MCF 10A (cell line): ENCODE measurements at regions of chr5 and their contacts with region 1.

Region 1: GRCh38 chr5:38265546-38266179 is 7.3 kb downstream of the EGFLAM start:
- DNase-seq: peak; percentile 61
- H3K4me3 Mint-ChIP-seq: no peak overlapping the region
- H3K27ac Mint-ChIP-seq: no peak overlapping the region
- H3K4me1 Mint-ChIP-seq: no peaks in the 10 kb centered on the region
- H3K27me3 Mint-ChIP-seq: peaks cover 52% of the 10 kb centered on the region
- CTCF ChIP-seq: peak; percentile 81

Region 2: GRCh38 chr5:37799865-37800421 is 465.7 kb before region 1 on chr5:
- CTCF ChIA-PET with region 1: no interaction called
- POLR2A ChIA-PET with region 1: no interaction called
- intact Hi-C with region 1: no loop called
- DNase-seq: peak; percentile 14
- H3K4me3 Mint-ChIP-seq: no peak overlapping the region
- H3K27ac Mint-ChIP-seq: no peak overlapping the region
- H3K4me1 Mint-ChIP-seq: no peaks in the 10 kb centered on the region
- H3K27me3 Mint-ChIP-seq: no peaks in the 10 kb centered on the region
- CTCF ChIP-seq: no peak

Region 3: DNA sequence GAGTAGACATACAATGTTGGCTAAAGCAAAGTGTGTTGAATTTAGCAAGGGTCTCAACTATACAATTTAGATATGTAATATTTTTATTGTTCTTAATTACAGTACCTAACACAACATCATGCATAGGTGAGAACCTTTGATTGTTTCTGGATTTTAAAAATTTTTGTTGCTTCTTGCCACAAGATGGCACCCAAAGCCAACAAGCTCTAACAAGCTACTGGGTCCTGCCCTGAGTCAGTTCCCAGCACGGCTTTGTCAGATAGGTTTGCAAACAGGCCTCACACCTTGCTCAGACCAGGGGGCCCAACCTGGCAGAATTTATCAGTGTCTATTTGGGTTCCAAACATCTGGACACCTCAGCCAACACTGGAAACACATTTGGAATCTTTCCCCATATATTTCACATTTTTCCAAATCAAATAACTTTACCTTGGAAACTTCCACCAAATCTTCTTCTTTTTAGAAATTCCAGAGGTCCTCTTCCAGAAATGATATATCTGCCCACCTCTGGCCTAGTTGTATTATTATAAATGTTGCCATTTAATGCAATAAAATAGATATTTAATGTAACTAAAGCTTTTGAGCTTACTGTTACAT is 56.8 kb before region 1 on chr5:
- CTCF ChIA-PET with region 1: interaction called, 5 read pairs
- POLR2A ChIA-PET with region 1: no interaction called
- intact Hi-C with region 1: loop called (anchors 5 kb)
- DNase-seq: peak; percentile 66
- H3K4me3 Mint-ChIP-seq: no peak overlapping the region
- H3K27ac Mint-ChIP-seq: no peak overlapping the region
- H3K4me1 Mint-ChIP-seq: peaks cover 11% of the 10 kb centered on the region
- H3K27me3 Mint-ChIP-seq: peaks cover 44% of the 10 kb centered on the region
- CTCF ChIP-seq: peak; percentile 77

Region 4: DNA sequence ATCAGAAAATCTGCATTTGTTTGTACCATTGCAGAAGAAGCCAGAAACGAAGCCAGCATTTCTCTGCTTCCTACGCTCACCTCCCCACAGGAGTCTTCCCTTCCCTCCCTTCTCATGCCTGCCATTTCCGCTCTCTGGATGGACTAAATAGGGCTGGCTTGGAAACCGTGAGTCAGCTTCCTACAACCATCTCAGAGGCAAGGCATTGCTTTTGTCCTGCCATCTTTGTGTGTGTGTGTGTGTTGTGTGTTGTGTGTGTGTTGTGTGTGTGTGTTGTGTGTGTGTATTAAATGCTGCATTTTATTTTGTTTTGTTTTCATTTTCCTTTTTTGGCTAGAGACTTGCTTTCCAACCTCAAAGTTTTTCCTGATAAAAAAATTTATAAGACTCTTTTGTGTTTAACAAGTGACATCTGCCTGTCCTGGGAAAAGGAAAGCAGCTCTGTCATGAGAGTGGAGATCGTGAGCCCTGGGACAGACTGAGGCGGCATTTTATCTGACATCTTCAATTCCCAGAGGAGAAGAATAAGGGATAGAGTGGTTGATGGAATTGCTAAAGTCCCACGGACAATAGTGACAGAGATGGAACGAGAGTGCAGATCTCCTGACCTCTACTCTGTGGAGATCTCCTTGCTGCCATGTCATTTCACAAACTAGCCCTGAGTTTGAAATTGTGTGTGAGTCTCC is 14.8 kb before region 1 on chr5:
- CTCF ChIA-PET with region 1: interaction called, 51 read pairs
- POLR2A ChIA-PET with region 1: no interaction called
- intact Hi-C with region 1: no loop called
- DNase-seq: no peak
- H3K4me3 Mint-ChIP-seq: no peak overlapping the region
- H3K27ac Mint-ChIP-seq: no peak overlapping the region
- H3K4me1 Mint-ChIP-seq: no peaks in the 10 kb centered on the region
- H3K27me3 Mint-ChIP-seq: peaks cover 15% of the 10 kb centered on the region
- CTCF ChIP-seq: no peak

Region 5: GRCh38 chr5:38285226-38285625 is 19.6 kb after region 1 on chr5:
- CTCF ChIA-PET with region 1: interaction called, 60 read pairs
- POLR2A ChIA-PET with region 1: no interaction called
- intact Hi-C with region 1: no loop called
- DNase-seq: no peak
- H3K4me3 Mint-ChIP-seq: no peak overlapping the region
- H3K27ac Mint-ChIP-seq: no peak overlapping the region
- H3K4me1 Mint-ChIP-seq: no peaks in the 10 kb centered on the region
- H3K27me3 Mint-ChIP-seq: no peaks in the 10 kb centered on the region
- CTCF ChIP-seq: no peak

Region 6: GRCh38 chr5:38291355-38291754 is 25.7 kb after region 1 on chr5:
- CTCF ChIA-PET with region 1: interaction called, 60 read pairs
- POLR2A ChIA-PET with region 1: interaction called, 3 read pairs
- intact Hi-C with region 1: no loop called
- DNase-seq: peak; percentile 33
- H3K4me3 Mint-ChIP-seq: no peak overlapping the region
- H3K27ac Mint-ChIP-seq: no peak overlapping the region
- H3K4me1 Mint-ChIP-seq: peaks cover 9% of the 10 kb centered on the region
- H3K27me3 Mint-ChIP-seq: no peaks in the 10 kb centered on the region
- CTCF ChIP-seq: no peak

Region 7: GRCh38 chr5:38297830-38298608 is 32.4 kb after region 1 on chr5:
- CTCF ChIA-PET with region 1: interaction called, 12 read pairs
- POLR2A ChIA-PET with region 1: no interaction called
- intact Hi-C with region 1: no loop called
- DNase-seq: no peak
- H3K4me3 Mint-ChIP-seq: no peak overlapping the region
- H3K27ac Mint-ChIP-seq: no peak overlapping the region
- H3K4me1 Mint-ChIP-seq: no peaks in the 10 kb centered on the region
- H3K27me3 Mint-ChIP-seq: no peaks in the 10 kb centered on the region
- CTCF ChIP-seq: no peak

Region 8: DNA sequence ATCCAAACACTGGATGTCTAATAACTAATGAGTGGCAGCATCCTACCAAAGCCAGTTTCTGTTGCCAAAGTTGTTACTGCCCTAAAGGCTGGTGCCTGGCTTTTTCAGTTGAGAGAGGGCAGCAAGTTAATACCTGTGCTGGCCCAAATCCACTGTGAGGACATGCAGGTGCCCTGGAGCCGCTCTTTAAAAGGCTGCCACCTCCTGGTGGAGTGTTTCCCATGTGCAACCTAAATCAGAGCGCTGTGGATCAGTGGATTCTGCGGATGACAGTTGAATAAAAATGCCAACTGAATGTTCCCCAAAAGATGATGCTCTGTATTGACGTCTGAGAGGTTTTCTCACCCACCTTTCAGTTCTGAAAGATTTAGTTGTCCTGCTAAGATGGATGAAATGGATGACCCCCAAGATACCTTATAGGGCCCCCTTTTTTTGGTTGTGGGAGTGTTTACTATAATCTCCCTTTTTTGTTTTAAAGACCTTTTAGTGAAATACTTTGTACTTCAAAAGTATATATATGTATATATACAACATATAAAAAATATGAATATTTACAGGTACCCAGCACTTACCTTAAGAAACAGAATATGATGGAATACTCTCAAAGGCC is 139.1 kb after region 1 on chr5:
- CTCF ChIA-PET with region 1: no interaction called
- POLR2A ChIA-PET with region 1: no interaction called
- intact Hi-C with region 1: loop called (anchors 2 kb)
- DNase-seq: peak; percentile 60
- H3K4me3 Mint-ChIP-seq: no peak overlapping the region
- H3K27ac Mint-ChIP-seq: no peak overlapping the region
- H3K4me1 Mint-ChIP-seq: peaks cover 6% of the 10 kb centered on the region
- H3K27me3 Mint-ChIP-seq: peaks cover 38% of the 10 kb centered on the region
- CTCF ChIP-seq: peak; percentile 13